ENCODE measurements at regions of chr10 and their contacts with region 1.

Region 1: DNA sequence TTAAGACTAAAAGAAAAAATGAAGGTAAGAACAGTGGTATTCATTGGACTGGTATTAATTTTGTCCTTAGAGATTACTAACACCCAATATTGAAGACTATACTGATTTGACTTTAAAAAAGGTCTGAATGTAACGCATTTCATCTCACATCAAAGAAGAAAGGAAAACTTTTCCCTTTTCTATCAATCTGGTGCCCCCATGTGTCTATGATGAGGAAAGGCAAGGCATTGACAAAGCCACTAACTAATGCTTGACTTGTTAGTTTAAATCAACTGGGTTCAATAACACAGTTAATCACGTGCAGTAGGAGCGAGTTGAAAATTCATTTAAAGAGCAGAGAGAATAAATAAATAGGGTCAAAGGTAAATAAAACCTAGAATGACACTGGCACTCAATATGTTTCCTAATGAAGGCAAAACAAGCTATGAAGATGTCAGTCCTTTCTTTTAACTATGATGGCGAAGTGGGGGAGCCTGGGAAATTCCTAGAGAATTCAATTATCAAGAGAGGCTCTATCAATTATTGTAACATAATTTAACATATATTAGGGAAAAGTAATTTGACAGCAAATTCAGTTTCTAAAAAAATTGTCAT is 180.9 kb downstream of the ANK3 start:
- DNase-seq: peak in 1 of 2 experiments; percentile 63
- H3K4me3 ChIP-seq: no peak overlapping the region
- H3K4me3 Mint-ChIP-seq: no peak overlapping the region
- H3K27ac Mint-ChIP-seq: no peak overlapping the region
- H3K4me1 ChIP-seq: peaks cover 10% of the 10 kb centered on the region; the same call in 1 of the 2 replicates
- H3K4me1 Mint-ChIP-seq: peaks cover 24% of the 10 kb centered on the region
- H3K27me3 ChIP-seq: no peaks in the 10 kb centered on the region
- H3K27me3 Mint-ChIP-seq: no peaks in the 10 kb centered on the region
- CTCF ChIP-seq: peak; percentile 96

Region 2: GRCh38 chr10:59894114-59894513 is 314.7 kb before region 1 on chr10:
- CTCF ChIA-PET with region 1: no interaction called
- POLR2A ChIA-PET with region 1: no interaction called
- intact Hi-C with region 1: no loop called
- DNase-seq: no peak
- H3K4me3 ChIP-seq: no peak overlapping the region
- H3K4me3 Mint-ChIP-seq: no peak overlapping the region
- H3K27ac Mint-ChIP-seq: no peak overlapping the region
- H3K4me1 ChIP-seq: peaks cover 33% of the 10 kb centered on the region
- H3K4me1 Mint-ChIP-seq: peaks cover 52% of the 10 kb centered on the region
- H3K27me3 ChIP-seq: no peaks in the 10 kb centered on the region
- H3K27me3 Mint-ChIP-seq: no peaks in the 10 kb centered on the region
- CTCF ChIP-seq: no peak

Region 3: DNA sequence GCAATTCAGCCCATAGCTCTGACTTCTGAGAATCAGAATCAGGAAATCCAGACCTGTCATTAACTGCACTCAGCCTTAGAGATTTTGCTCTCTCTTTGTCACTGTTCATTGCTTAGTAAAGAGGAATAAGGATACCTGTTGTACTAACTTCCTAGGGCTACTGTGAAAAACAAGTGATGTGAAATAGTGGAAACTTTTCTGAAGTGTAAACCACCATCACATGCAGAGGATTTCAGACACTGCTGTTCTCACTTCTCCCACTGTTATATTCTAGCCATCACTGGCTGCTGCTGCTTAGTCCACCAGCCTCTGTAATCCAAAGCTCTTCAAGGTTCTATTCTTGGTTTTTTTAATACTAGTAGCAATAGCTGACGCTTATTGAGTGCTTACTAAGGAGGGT is 172.8 kb before region 1 on chr10:
- CTCF ChIA-PET with region 1: no interaction called
- POLR2A ChIA-PET with region 1: no interaction called
- intact Hi-C with region 1: no loop called
- DNase-seq: no peak
- H3K4me3 ChIP-seq: no peak overlapping the region
- H3K4me3 Mint-ChIP-seq: no peak overlapping the region
- H3K27ac Mint-ChIP-seq: no peak overlapping the region
- H3K4me1 ChIP-seq: peaks cover 11% of the 10 kb centered on the region; the same call in 1 of the 2 replicates
- H3K4me1 Mint-ChIP-seq: peaks cover 8% of the 10 kb centered on the region
- H3K27me3 ChIP-seq: no peaks in the 10 kb centered on the region
- H3K27me3 Mint-ChIP-seq: no peaks in the 10 kb centered on the region
- CTCF ChIP-seq: no peak

Region 4: DNA sequence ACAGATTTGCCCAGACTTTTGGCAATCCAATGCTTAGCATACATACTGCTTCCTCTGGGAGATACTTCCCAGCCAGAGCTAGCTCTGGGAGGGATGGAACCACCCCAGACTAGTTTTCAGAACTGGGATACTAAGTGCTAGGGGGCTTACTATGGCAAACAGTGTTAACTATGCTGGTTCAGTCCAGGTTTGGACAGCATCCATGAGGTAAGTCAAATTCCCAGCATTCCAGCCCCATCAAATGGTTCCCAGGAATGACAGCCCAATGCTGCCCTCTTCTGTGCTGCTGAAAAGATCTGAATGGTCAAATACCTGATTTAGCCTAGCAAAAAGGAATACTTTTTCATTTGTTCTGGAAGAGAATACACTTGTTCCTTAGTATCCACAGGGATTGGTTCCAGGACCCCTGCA is 160.7 kb before region 1 on chr10:
- CTCF ChIA-PET with region 1: no interaction called
- POLR2A ChIA-PET with region 1: no interaction called
- intact Hi-C with region 1: loop called (anchors 1 kb)
- DNase-seq: peak; percentile 81 to 83
- H3K4me3 ChIP-seq: no peak overlapping the region
- H3K4me3 Mint-ChIP-seq: no peak overlapping the region
- H3K27ac Mint-ChIP-seq: no peak overlapping the region
- H3K4me1 ChIP-seq: peaks cover 5% of the 10 kb centered on the region
- H3K4me1 Mint-ChIP-seq: no peaks in the 10 kb centered on the region
- H3K27me3 ChIP-seq: no peaks in the 10 kb centered on the region
- H3K27me3 Mint-ChIP-seq: no peaks in the 10 kb centered on the region
- CTCF ChIP-seq: peak; percentile 84 to 86

Region 5: DNA sequence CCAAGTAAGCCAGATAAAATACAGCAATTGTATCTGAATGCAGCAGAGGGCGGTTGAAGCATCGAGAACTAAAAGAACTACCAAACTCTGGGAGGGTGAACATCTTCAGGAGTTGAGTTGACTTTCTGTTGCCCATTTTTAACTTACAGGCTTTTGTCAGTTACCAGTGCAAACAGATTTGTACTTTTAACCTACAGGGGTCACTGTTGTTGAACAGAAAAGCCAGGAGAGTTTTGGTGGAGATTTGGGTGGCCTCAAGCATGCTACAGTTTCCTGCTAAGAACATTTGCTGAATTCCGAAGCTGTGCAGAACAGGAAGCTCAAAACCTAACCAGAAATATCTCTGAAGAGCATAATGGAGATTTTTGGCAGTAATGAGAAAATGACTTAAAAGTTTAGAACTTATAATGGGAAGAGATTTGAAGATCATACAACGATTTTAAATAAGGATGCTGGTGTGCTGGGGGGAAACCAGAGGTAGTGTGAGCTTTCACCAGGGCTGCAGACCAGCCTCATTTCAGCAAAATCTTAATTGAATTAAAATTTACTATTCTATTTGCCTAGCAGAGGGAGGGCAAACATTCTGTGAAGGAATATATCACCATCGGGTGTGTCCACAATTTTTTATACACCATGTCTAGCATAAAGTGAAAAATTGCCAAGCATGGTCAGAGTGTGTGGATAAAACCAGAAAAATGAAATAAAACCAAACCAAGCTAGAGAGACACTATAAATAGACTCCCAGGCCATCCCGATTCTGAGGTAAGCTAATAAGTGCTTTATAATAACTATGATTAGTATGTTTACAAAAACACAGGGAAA is 93.8 kb before region 1 on chr10:
- CTCF ChIA-PET with region 1: interaction called, 15 read pairs
- POLR2A ChIA-PET with region 1: no interaction called
- intact Hi-C with region 1: loop called (anchors 1 kb)
- DNase-seq: peak in 1 of 2 experiments; percentile 77
- H3K4me3 ChIP-seq: no peak overlapping the region
- H3K4me3 Mint-ChIP-seq: no peak overlapping the region
- H3K27ac Mint-ChIP-seq: no peak overlapping the region
- H3K4me1 ChIP-seq: no peaks in the 10 kb centered on the region
- H3K4me1 Mint-ChIP-seq: no peaks in the 10 kb centered on the region
- H3K27me3 ChIP-seq: no peaks in the 10 kb centered on the region
- H3K27me3 Mint-ChIP-seq: no peaks in the 10 kb centered on the region
- CTCF ChIP-seq: peak; percentile 85 to 86

Region 6: GRCh38 chr10:60140651-60141632 is 67.8 kb before region 1 on chr10:
- CTCF ChIA-PET with region 1: interaction called, 6 read pairs
- POLR2A ChIA-PET with region 1: interaction called, 5 read pairs
- intact Hi-C with region 1: loop called (anchors 1 kb)
- DNase-seq: peak; percentile 81 to 83
- H3K4me3 ChIP-seq: peak overlapping the region; percentile 38
- H3K4me3 Mint-ChIP-seq: no peak overlapping the region
- H3K27ac Mint-ChIP-seq: no peak overlapping the region
- H3K4me1 ChIP-seq: peaks cover 61% of the 10 kb centered on the region
- H3K4me1 Mint-ChIP-seq: peaks cover 13% of the 10 kb centered on the region
- H3K27me3 ChIP-seq: no peaks in the 10 kb centered on the region
- H3K27me3 Mint-ChIP-seq: no peaks in the 10 kb centered on the region
- CTCF ChIP-seq: peak in 1 of 2 experiments; percentile 0

Region 7: GRCh38 chr10:60175441-60175971 is 33.3 kb before region 1 on chr10:
- CTCF ChIA-PET with region 1: interaction called, 9 read pairs
- POLR2A ChIA-PET with region 1: no interaction called
- intact Hi-C with region 1: loop called (anchors 1 kb)
- DNase-seq: peak; percentile 69 to 82
- H3K4me3 ChIP-seq: no peak overlapping the region
- H3K4me3 Mint-ChIP-seq: peak overlapping the region; percentile 2
- H3K27ac Mint-ChIP-seq: peak overlapping the region; percentile 54
- H3K4me1 ChIP-seq: peaks cover 65% of the 10 kb centered on the region
- H3K4me1 Mint-ChIP-seq: peaks cover 51% of the 10 kb centered on the region
- H3K27me3 ChIP-seq: no peaks in the 10 kb centered on the region
- H3K27me3 Mint-ChIP-seq: no peaks in the 10 kb centered on the region
- CTCF ChIP-seq: no peak

Region 8: DNA sequence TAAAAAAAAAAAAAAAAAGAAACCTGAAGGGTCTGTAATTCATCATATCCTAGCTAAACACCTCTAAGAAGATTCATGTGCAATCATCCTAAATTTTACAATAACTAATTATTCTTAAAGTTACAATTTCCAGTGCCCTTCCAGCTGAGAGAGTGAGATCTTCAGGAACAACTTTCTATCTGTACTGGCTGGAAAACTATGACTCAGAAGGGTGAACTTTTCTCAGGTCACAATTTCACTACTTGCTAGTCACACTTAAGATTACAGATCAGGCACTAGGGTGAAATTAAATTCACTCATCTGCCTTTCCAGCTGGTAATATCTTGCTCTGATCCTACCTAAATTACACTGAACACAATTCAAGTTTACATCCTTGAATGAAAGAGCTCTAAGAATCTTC is 22.1 kb after region 1 on chr10:
- CTCF ChIA-PET with region 1: no interaction called
- POLR2A ChIA-PET with region 1: no interaction called
- intact Hi-C with region 1: no loop called
- DNase-seq: no peak
- H3K4me3 ChIP-seq: no peak overlapping the region
- H3K4me3 Mint-ChIP-seq: no peak overlapping the region
- H3K27ac Mint-ChIP-seq: no peak overlapping the region
- H3K4me1 ChIP-seq: no peaks in the 10 kb centered on the region
- H3K4me1 Mint-ChIP-seq: peaks cover 6% of the 10 kb centered on the region
- H3K27me3 ChIP-seq: no peaks in the 10 kb centered on the region
- H3K27me3 Mint-ChIP-seq: no peaks in the 10 kb centered on the region
- CTCF ChIP-seq: no peak

Region 9: GRCh38 chr10:60434418-60435046 is 225.8 kb after region 1 on chr10:
- CTCF ChIA-PET with region 1: no interaction called
- POLR2A ChIA-PET with region 1: no interaction called
- intact Hi-C with region 1: loop called (anchors 1 kb)
- DNase-seq: peak; percentile 55 to 76
- H3K4me3 ChIP-seq: no peak overlapping the region
- H3K4me3 Mint-ChIP-seq: no peak overlapping the region
- H3K27ac Mint-ChIP-seq: no peak overlapping the region
- H3K4me1 ChIP-seq: no peaks in the 10 kb centered on the region
- H3K4me1 Mint-ChIP-seq: no peaks in the 10 kb centered on the region
- H3K27me3 ChIP-seq: no peaks in the 10 kb centered on the region
- H3K27me3 Mint-ChIP-seq: no peaks in the 10 kb centered on the region
- CTCF ChIP-seq: peak; percentile 84 to 90